Heart left ventricle (tissue), 16 donors: ENCODE measurements at regions of chr2 and their contacts with region 1.

Region 1: GRCh38 chr2:105744091-105744908 is 412 bp upstream of the NCK2 start:
- DNase-seq: peak; percentile 72 to 88 (median 77)
- ATAC-seq: peak; percentile 60 to 94 (median 90)
- H3K4me3 ChIP-seq: peak overlapping the region; percentile 38 to 95 (median 72)
- H3K27ac ChIP-seq: peak overlapping the region; percentile 83 to 95 (median 93)
- H3K4me1 ChIP-seq: peaks cover 6 to 56% (median 37%) of the 10 kb centered on the region in 12 donors
- H3K27me3 ChIP-seq: no peaks in the 10 kb centered on the region
- CTCF ChIP-seq: no peak
- POLR2A ChIP-seq: no peak

Region 2: DNA sequence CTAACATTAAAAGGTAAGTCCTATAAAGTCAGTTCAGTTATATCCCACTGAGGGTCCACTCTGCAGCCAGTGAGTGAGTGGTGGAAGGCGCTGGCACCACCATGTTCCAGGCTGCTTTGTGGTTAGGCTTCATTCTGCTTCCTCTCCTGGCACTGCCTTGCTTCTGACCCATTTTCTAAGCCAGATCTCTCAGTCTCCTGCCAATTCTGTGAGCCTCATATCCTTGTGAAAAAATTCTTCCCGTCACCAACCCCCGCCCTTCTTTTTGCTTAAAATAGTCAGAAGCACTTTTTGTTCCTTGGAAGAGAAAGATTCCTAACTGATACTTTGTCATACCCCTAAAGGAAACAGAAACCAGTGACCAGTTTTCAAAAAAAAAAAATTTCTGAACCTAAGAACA is 139.4 kb before region 1 on chr2:
- intact Hi-C with region 1: loop called in 3 of 10 experiments (anchors 5 to 10 kb)
- DNase-seq: peak in 3 of 5 donors; percentile 43 to 44 (median 43)
- ATAC-seq: peak; percentile 70 to 86 (median 82)
- H3K4me3 ChIP-seq: peak overlapping the region in 3 of 12 donors; percentile 1 to 22 (median 18)
- H3K27ac ChIP-seq: peak overlapping the region; percentile 36 to 70 (median 59)
- H3K4me1 ChIP-seq: peaks cover 0 to 28% (median 16%) of the 10 kb centered on the region in 12 donors
- H3K27me3 ChIP-seq: no peaks in the 10 kb centered on the region
- CTCF ChIP-seq: no peak
- POLR2A ChIP-seq: no peak

Region 3: DNA sequence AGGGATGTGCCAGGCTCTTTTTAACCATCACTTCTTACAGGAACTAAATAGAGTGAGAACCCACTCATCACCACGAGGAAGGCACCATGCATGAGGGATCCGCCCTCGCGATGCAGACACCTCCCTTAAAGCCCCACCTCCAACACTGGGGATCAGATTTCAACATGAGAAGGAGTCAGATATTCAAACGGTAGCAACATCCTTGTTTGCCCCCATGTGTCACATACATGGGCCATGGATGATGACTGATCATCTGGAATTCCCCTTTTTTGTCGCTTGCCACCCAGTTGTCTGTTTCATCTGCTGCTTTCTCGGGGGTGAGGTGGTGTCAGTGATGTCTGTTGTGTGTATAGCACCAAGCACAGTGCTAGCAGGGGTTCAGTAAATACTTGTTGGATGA is 58.3 kb after region 1 on chr2:
- intact Hi-C with region 1: loop called in 1 of 10 experiments (anchors 10 kb)
- DNase-seq: no peak
- ATAC-seq: no peak
- H3K4me3 ChIP-seq: no peak overlapping the region
- H3K27ac ChIP-seq: peak overlapping the region in 1 of 12 donors; percentile 47
- H3K4me1 ChIP-seq: peaks cover 6 to 87% (median 55%) of the 10 kb centered on the region in 12 donors
- H3K27me3 ChIP-seq: no peaks in the 10 kb centered on the region
- CTCF ChIP-seq: no peak
- POLR2A ChIP-seq: no peak

Region 4: DNA sequence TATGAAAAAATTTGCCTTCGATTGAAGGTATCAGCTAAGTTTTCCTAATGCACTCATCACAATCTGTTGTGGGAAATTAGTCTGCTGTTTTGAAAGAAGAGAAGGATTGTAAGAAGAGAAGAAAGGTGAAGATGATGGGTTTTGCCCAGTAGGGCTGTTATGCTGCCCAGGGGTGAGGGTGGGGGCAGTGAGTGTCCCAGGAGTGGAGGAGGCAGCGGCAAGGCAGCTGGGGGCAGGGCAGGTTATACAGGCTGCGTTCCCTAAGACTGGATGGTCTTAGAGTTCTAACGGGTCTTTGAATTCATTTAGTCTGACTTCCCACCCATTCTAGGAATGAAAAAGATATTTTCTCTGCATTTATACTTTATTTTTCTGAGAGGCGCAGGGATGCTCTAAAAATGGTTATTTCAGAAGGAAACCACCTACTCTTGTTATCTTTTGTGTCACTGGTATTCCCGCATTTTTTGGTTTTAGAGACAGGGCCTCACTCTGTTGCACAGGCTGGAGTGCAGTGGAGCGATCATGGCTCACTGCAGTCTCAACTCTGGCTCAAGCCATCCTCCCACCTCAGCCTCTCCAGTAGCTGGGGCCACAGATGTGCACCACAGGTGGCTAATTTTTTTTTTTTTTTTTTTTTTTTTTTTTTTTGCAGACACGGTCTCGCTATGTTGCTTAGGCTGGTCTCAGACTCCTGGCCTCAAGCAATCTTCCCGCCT is 136.2 kb after region 1 on chr2:
- intact Hi-C with region 1: loop called in 5 of 10 experiments (anchors 5 to 10 kb)
- DNase-seq: no peak
- ATAC-seq: no peak
- H3K4me3 ChIP-seq: no peak overlapping the region
- H3K27ac ChIP-seq: no peak overlapping the region
- H3K4me1 ChIP-seq: peaks cover 0 to 50% (median 31%) of the 10 kb centered on the region in 12 donors
- H3K27me3 ChIP-seq: no peaks in the 10 kb centered on the region
- CTCF ChIP-seq: no peak
- POLR2A ChIP-seq: no peak

Region 5: DNA sequence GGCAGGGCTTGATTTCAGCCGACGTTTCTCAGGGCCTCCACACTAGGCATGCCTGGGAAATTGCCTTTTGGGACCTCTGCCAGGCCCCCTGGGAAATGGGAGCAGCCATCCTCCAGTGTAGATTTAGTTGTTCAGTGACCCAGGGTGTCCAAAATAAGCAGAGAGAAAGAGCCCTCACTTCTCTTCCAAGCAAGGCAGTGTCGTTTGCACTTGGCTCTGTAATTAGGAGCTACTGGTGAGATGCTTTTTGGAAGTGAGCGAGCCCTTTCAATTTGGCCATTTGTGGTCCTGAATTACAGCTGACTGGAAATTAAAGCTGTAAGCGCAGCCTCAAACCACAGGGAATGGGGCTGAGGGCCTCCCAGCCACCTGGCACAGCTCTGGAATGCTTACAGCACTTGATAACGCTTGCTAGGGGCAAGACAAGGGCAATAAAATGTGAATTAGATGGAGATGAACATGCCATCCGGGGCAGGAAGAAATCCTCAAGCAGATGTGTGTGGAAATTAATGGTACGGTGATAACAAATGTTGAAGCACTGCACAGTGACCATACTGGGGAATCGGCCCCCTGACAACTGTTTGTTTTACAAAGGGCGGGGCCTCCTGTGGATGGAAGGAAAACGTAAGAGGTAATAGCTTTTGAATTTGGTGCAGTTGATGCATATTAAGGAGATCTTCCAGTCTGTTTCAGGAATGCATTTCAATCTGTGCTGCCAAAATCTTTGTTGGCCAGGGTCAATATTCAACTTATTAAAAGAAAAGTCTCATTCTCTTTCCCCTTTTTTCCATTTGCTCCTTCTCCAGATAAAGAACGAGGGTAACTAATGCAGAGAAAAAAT is 276.7 kb after region 1 on chr2:
- intact Hi-C with region 1: loop called in 1 of 10 experiments (anchors 10 kb)
- DNase-seq: peak in 4 of 5 donors; percentile 29 to 49 (median 38)
- ATAC-seq: peak in 2 of 4 donors; percentile 29 to 32
- H3K4me3 ChIP-seq: no peak overlapping the region
- H3K27ac ChIP-seq: peak overlapping the region in 7 of 12 donors; percentile 0 to 68 (median 8)
- H3K4me1 ChIP-seq: peaks cover under 1 to 36% (median 15%) of the 10 kb centered on the region in 12 donors
- H3K27me3 ChIP-seq: no peaks in the 10 kb centered on the region
- CTCF ChIP-seq: no peak
- POLR2A ChIP-seq: no peak

Region 6: DNA sequence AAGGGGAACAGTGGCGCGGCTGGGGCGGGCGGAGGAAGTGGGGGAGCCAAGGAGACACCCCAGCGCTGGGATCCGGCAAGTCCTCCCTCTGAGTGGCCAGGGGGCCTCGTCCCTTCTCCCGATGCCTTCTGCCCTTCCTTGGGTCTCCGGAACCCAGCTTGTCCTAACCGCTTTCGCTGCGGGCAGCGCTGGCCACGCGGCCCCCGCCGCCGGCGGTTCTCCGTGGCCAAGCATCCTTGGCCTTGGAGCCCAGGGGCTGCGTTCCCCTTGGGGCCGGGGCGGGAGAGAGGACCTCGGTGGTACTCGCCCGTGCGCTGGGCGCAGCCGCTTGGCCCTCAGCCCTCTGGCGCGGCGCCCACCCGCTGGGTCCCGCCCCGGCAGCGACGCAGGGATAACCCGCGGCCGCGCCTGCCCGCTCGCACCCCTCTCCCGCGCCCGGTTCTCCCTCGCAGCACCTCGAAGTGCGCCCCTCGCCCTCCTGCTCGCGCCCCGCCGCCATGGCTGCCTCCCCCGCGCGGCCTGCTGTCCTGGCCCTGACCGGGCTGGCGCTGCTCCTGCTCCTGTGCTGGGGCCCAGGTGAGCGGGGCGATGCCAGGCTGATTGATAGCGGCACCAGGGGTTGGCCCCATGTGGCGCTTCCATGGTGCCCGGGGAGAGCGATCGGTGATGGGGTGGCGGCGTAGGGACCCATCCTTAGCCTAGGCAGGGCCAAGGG is 321.1 kb after region 1 on chr2:
- intact Hi-C with region 1: loop called in 1 of 10 experiments (anchors 10 kb)
- DNase-seq: peak; percentile 27 to 73 (median 46)
- ATAC-seq: peak in 3 of 4 donors; percentile 57 to 81 (median 70)
- H3K4me3 ChIP-seq: peak overlapping the region; percentile 44 to 71 (median 56)
- H3K27ac ChIP-seq: peak overlapping the region in 4 of 12 donors; percentile 30 to 46 (median 38)
- H3K4me1 ChIP-seq: peaks cover 0 to 19% (median 7%) of the 10 kb centered on the region in 12 donors
- H3K27me3 ChIP-seq: peaks cover 0 to 21% (median 10%) of the 10 kb centered on the region in 9 donors
- CTCF ChIP-seq: no peak
- POLR2A ChIP-seq: no peak